HEK293 (cell line): ENCODE measurements at regions of chr15 and their contacts with region 1.

Region 1: GRCh38 chr15:42491545-42492225 is 744 bp upstream of the ZNF106 start:
- H3K4me3 ChIP-seq: peak overlapping the region; percentile 81
- H3K27ac ChIP-seq: peak overlapping the region; percentile 37; the same call in 1 of the 2 replicates
- H3K4me1 ChIP-seq: no peaks in the 10 kb centered on the region
- CTCF ChIP-seq: no peak

Region 2: DNA sequence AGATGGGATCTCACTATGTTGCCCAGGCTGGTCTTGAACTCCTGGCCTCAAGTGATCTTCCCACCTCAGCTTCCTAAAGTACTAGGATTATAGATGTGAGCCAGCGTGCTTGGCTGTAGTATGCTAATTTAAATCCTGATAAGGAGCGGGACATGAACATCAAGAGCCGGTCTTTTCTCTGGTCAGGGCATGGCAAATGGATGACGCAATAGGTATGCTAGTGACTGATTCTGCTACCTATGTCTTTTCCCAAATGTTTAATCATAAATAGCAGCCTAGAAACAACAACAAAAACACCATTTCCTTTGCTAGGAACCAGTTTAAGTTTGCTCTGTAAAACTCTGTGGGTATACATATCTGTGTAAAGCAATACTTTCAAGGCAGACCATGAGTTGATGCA is 148.4 kb after region 1 on chr15:
- CTCF ChIA-PET with region 1: no interaction called
- POLR2A ChIA-PET with region 1: interaction called, 13 read pairs
- H3K4me3 ChIP-seq: no peak overlapping the region
- H3K27ac ChIP-seq: no peak overlapping the region
- H3K4me1 ChIP-seq: no peaks in the 10 kb centered on the region
- CTCF ChIP-seq: no peak